Right ventricle myocardium inferior (tissue), 1 donor: ENCODE measurements at regions of chr3 and their contacts with region 1.

Region 1: DNA sequence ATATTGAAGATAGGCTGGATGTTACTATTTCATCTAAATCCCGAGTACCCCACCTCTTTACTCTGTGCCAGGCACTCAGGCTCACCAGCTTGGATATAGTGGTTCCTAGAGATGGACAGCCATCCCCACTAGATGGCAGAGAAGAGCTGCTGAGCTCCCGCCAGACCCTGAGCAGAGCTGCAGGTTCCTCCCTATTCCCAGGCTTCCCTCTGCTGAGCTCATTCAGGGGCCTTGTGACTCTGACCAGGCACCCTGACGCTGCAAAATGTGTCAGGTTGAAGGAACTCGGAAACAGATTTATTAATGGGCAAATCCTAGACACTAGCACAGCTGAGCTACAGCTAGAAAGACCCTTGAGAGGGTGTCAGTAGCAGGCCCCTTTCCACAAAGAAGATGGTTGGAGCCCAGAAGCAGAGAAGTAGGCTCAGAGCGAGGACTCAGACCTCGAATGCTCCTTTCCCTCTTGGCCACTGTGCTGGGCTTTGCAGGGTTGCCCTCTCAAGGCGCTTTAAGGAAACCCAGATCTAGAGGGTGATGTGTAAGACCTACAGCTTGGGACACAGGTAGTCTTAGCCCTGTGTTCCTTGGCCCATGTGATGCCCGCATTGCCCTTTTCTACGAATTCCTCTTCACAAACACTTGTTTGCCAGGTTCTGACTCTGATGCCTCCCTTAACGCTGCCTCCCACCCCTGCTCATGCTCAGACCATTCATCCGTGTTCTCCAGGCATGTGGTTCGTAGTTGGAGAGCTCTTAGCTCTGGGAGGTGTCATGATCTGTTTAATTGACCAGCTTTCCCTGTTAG is 38.0 kb upstream of the RHO start:
- DNase-seq: peak; percentile 85
- ATAC-seq: peak; percentile 95

Region 2: GRCh38 chr3:129606636-129607390 is 116.4 kb after region 1 on chr3 and contains the start of gene PLXND1:
- intact Hi-C with region 1: loop called (anchors 5 kb)
- DNase-seq: peak; percentile 90
- ATAC-seq: peak; percentile 79
- total RNA-seq, gene PLXND1: 66.3 TPM

Region 3: DNA sequence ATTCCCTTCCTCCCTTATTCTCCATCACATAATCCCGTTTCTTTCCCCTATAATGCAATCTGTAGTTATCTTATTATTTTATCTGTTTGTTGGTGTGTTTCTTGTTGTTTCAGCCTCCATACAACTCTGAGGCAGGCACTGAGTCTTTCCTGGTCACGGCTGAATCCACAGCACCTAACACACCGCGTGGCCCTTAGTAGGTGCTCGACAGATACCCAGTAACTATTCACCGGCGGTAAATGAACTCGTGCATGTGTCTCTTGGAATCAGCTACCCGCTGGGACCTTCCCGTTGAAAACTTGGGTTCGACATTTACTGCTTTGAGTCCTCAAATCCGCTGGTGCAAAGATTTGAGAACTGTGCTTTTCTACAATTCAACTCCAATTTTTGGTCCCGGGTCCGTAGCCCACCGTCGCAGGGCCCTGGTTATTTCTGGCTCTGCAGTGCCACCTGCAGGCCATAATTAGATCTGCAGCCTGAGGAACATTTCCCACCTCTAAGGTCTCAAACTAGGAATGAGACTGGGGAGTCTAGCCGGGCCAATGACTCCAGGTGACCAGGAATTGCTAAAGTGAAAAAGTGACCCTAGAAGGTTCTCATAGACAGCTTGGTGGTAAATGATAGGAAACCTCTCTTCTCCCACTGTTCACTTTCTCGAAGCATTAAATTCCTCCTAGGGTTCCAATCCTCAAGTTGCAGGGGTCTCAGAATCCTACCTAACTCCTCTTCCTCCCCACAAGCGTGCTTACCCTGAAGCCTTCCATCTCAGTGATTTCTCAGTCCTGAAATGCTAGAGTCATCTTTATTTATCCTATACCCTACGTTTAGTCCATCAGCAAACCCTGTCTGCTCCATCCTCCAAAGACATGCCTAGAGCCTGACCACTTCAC is 444.0 kb after region 1 on chr3:
- intact Hi-C with region 1: loop called (anchors 5 kb)
- DNase-seq: no peak
- ATAC-seq: no peak